ENCODE measurements at regions of chr6 and their contacts with region 1.

Region 1: DNA sequence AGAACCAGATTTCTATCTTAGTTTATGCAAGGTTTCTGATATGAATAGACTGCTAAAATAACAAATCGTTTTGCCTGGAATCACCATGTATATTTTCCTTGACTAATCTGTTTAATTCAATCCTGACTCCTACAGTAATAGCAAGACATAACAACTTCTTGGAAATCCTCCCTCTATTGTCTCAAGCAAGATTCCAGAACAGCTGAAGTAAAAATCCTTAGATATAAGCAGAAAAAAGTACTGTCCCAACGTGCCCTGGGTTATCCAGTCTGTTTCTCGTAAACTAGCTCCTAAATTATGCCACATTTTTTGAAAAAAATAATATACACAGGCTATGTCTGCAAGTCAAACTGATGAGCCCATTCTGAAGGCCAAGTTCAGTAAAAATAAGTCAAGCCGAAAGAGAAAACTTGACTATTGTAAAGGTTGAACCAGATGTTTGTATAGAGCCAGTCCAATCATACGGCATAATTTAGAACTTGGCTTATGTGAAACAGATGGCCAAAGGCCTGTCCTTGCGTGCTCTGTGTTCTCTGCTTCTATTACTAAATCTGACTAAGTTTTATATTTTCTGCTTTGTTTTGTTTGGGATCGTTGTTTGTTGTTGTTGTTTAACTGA is 341.6 kb upstream of the NRSN1 start:
- DNase-seq: no peak
- H3K4me3 ChIP-seq: no peak overlapping the region
- CTCF ChIP-seq: no peak
- POLR2A ChIP-seq: no peak

Region 2: DNA sequence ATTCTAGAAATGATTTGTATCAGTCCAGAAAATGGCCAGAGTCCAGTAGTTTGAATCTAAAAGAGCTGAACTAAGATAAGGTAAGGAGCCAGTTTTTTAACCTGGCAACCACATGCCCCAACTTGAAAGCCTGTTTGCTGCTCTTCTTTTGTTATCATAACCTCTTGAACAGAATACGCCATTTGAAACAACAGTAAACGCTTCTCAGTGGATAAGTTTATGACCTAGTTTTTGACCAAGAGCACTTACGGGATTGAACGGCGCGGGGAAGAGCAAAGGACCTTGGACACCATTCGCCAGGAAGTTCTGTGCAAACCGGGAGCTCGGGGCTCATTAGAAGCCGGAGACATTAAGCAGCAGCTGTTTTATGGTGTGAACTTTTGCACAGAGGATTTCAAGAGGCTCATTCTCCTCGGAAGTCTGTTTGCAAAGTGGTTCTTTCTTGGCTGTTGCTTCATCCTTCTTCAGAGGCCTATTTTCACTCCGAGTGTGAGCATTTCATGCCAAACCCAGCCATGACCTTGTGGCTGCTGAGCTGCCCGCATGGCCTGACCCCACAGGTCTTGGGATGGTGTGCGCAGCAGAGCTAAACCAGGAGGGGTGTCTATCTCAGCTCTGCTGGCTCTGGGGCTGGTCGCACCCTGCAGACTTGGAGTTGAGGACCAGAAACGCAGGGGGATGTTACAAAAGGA is 1975.7 kb before region 1 on chr6:
- intact Hi-C with region 1: no loop called
- DNase-seq: peak in 1 of 2 donors; percentile 68
- H3K4me3 ChIP-seq: no peak overlapping the region
- CTCF ChIP-seq: no peak
- POLR2A ChIP-seq: no peak

Region 3: GRCh38 chr6:23747239-23747638 is 37.2 kb before region 1 on chr6:
- intact Hi-C with region 1: loop called (anchors 1 kb)
- DNase-seq: no peak
- H3K4me3 ChIP-seq: no peak overlapping the region
- CTCF ChIP-seq: no peak
- POLR2A ChIP-seq: no peak

Region 4: GRCh38 chr6:25697537-25698345 is 1913.3 kb after region 1 on chr6:
- intact Hi-C with region 1: no loop called
- DNase-seq: no peak
- H3K4me3 ChIP-seq: no peak overlapping the region
- CTCF ChIP-seq: no peak
- POLR2A ChIP-seq: no peak